Mammary epithelial cell (primary cell): ENCODE measurements at regions of chr16 and their contacts with region 1.

Region 1: GRCh38 chr16:88585269-88585668 is 15.1 kb downstream of the ZC3H18 start:
- DNase-seq: no peak
- H3K4me3 ChIP-seq: no peak overlapping the region
- H3K27ac ChIP-seq: no peak overlapping the region
- H3K4me1 ChIP-seq: no peaks in the 10 kb centered on the region
- H3K27me3 ChIP-seq: no peaks in the 10 kb centered on the region
- CTCF ChIP-seq: no peak

Region 2: DNA sequence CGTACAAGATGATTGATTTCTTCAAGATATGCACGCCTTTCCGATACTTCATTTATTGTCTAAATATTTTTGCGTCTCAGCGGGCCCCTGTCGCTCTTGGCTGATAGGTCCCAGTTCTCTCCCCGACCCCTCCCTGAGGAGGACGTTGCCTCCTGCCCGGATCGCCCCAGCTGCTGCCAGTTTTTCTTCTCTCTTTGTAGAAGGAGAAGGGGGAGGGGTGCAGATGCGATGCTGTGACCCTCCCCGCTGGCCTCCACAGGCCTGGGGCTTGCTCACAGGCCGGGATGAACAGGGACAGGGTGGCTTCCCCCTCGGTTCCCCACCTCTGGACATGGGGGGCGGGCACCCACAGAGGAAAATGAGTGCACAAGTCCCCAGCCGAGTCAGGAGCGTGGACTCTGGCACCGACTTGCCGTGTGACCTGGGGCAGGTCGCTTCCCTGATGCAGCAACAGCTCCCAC is 68.6 kb before region 1 on chr16:
- CTCF ChIA-PET with region 1: no interaction called
- dilution Hi-C with region 1: loop called (anchors 5 kb)
- in situ Hi-C with region 1: no loop called
- intact Hi-C with region 1: no loop called
- DNase-seq: no peak
- H3K4me3 ChIP-seq: no peak overlapping the region
- H3K27ac ChIP-seq: no peak overlapping the region
- H3K4me1 ChIP-seq: no peaks in the 10 kb centered on the region
- H3K27me3 ChIP-seq: no peaks in the 10 kb centered on the region
- CTCF ChIP-seq: no peak

Region 3: GRCh38 chr16:88569985-88570690 is 15.1 kb before region 1 on chr16 and contains the start of gene ZC3H18:
- CTCF ChIA-PET with region 1: no interaction called
- dilution Hi-C with region 1: no loop called
- in situ Hi-C with region 1: no loop called
- intact Hi-C with region 1: loop called (anchors 1 kb)
- DNase-seq: peak; percentile 96
- H3K4me3 ChIP-seq: peak within 1 kb of the TSS; percentile 93 to 99 (median 99)
- H3K27ac ChIP-seq: peak within 1 kb of the TSS; percentile 41
- H3K4me1 ChIP-seq: peaks cover 23% of the 10 kb centered on the region
- H3K27me3 ChIP-seq: no peaks in the 10 kb centered on the region
- CTCF ChIP-seq: no peak
- total RNA-seq, gene ZC3H18: 9.0 to 48.2 TPM

Region 4: GRCh38 chr16:88628512-88628974 is 43.3 kb after region 1 on chr16:
- CTCF ChIA-PET with region 1: no interaction called
- dilution Hi-C with region 1: loop called (anchors 5 kb)
- in situ Hi-C with region 1: no loop called
- intact Hi-C with region 1: no loop called
- DNase-seq: no peak
- H3K4me3 ChIP-seq: no peak overlapping the region
- H3K27ac ChIP-seq: no peak overlapping the region
- H3K4me1 ChIP-seq: no peaks in the 10 kb centered on the region
- H3K27me3 ChIP-seq: no peaks in the 10 kb centered on the region
- CTCF ChIP-seq: peak in 1 of 2 donors; percentile 30

Region 5: DNA sequence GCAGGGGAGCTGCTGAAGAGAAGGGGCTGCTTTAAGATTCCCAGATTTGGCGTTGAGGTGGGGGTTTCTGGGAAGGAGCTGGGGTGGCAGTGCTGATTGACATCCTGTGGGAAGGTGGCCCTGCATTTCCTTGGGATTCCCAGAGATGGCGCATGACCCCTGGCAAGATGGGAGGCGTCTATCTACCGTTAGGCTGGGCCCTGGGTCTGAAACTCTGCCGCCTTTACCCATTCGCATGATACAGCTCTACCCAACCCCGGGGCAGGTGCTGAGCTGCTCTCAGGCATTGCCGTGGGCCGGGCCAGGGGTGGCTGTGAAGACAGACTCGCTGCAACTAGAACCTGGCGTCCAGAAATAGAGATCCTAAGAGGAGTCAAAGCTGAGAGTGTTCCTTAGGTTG is 87.5 kb after region 1 on chr16:
- CTCF ChIA-PET with region 1: no interaction called
- dilution Hi-C with region 1: loop called (anchors 5 kb)
- in situ Hi-C with region 1: no loop called
- intact Hi-C with region 1: no loop called
- DNase-seq: no peak
- H3K4me3 ChIP-seq: no peak overlapping the region
- H3K27ac ChIP-seq: no peak overlapping the region
- H3K4me1 ChIP-seq: no peaks in the 10 kb centered on the region
- H3K27me3 ChIP-seq: no peaks in the 10 kb centered on the region
- CTCF ChIP-seq: peak; percentile 13 to 28